Mammary epithelial cell (primary cell): ENCODE measurements at regions of chr20 and their contacts with region 1.

Region 1: GRCh38 chr20:1509237-1509636 is 18.0 kb upstream of the SIRPB2 start:
- DNase-seq: peak; percentile 54
- H3K4me3 ChIP-seq: no peak overlapping the region
- H3K27ac ChIP-seq: no peak overlapping the region
- H3K4me1 ChIP-seq: peaks cover 38% of the 10 kb centered on the region
- H3K27me3 ChIP-seq: no peaks in the 10 kb centered on the region
- CTCF ChIP-seq: peak; percentile 51 to 69

Region 2: GRCh38 chr20:1456300-1456699 is 52.9 kb before region 1 on chr20:
- CTCF ChIA-PET with region 1: no interaction called
- dilution Hi-C with region 1: no loop called
- in situ Hi-C with region 1: no loop called
- intact Hi-C with region 1: no loop called
- DNase-seq: no peak
- H3K4me3 ChIP-seq: no peak overlapping the region
- H3K27ac ChIP-seq: no peak overlapping the region
- H3K4me1 ChIP-seq: no peaks in the 10 kb centered on the region
- H3K27me3 ChIP-seq: no peaks in the 10 kb centered on the region
- CTCF ChIP-seq: no peak

Region 3: DNA sequence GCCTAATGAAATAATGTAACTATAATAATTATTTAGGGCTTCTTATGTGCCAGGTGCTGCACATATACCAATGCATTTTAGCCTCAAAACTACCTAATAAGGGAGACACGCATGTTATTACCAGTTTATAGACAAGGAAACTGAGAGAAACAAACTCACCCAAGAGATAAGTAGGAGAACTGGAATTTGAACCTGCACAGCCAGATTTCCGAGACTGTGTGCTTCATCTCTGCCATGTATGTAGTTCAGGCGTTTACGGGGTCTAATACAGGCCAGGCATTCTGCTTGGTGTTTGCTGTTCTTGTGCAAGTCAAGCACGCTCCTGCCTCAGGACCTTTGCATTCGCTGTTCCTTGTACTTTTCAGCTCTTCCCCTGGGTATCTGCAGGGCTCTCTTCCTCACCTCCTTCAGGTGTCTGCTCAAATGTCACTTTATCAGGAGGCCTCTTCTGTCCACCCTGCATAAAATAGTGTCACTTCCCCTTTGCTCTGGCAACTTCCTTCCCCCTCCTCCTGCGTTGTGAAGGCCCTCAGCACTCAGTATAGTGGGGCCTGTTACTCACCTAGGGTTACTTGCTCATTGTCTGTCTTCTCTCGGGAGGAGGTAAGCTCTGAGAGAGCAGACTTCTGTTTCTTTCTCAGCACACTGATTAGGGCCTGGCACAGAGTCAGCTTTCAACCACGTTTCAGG is 36.5 kb before region 1 on chr20:
- CTCF ChIA-PET with region 1: no interaction called
- dilution Hi-C with region 1: no loop called
- in situ Hi-C with region 1: no loop called
- intact Hi-C with region 1: no loop called
- DNase-seq: no peak
- H3K4me3 ChIP-seq: no peak overlapping the region
- H3K27ac ChIP-seq: no peak overlapping the region
- H3K4me1 ChIP-seq: peaks cover 47% of the 10 kb centered on the region
- H3K27me3 ChIP-seq: no peaks in the 10 kb centered on the region
- CTCF ChIP-seq: no peak

Region 4: DNA sequence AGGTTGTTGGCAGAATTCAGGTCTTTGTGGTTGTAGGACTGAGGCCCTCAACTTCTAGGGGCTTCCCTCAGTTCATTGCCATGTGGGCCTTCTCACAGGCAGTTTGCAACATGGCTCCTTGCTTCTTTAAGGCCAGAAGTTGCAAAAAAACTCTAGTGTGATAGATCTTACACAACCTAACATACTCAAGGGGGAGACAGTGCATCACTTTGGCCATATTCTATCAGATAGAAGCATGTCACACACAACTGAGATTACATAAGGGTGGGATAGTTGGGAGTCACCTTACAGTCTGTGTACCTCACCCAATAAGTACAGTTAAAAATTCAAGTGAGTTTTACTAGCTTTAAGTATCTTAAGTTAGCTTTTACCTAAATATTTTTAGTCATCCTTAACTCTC is 46.7 kb after region 1 on chr20:
- CTCF ChIA-PET with region 1: no interaction called
- dilution Hi-C with region 1: no loop called
- in situ Hi-C with region 1: no loop called
- intact Hi-C with region 1: loop called (anchors 5 kb)
- DNase-seq: no peak
- H3K4me3 ChIP-seq: no peak overlapping the region
- H3K27ac ChIP-seq: no peak overlapping the region
- H3K4me1 ChIP-seq: no peaks in the 10 kb centered on the region
- H3K27me3 ChIP-seq: no peaks in the 10 kb centered on the region
- CTCF ChIP-seq: no peak

Region 5: DNA sequence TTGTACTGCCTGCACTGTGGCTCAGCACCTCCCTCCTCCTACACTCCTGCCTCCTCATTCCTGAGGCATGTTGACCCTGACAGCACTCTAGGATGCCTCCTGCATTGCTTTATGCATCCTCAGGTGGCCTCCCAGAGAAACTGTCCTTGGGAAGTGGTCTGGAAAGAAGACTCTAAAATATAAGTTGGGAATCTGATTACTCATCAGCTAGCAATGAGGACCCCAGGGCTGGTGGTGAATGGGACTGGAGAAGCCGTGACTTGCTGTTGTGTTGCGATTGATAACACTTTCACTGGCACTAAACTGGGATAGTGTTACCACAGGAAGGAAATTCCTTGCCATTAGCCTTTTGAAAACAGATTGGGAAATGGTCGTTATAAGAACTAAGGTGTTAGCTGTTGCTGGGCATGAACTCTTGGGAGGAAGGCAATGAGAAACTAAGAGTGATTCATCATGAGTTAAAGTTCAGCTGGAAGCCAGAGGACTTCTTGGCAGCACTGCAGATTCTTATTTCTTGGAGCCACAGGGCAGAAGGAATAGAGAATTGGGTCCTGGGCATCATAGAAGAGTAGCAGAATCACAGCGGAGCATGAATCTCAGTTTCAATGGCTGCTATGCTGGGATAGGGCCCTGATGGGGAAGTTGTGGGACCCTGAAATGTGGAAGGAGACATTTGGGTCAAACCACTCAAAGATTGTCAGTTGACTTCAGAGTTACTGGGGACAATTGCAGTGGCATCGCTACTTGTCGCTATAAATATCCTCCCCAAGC is 58.3 kb after region 1 on chr20:
- CTCF ChIA-PET with region 1: no interaction called
- dilution Hi-C with region 1: no loop called
- in situ Hi-C with region 1: no loop called
- intact Hi-C with region 1: loop called (anchors 2 kb)
- DNase-seq: peak; percentile 89
- H3K4me3 ChIP-seq: no peak overlapping the region
- H3K27ac ChIP-seq: peak overlapping the region; percentile 80
- H3K4me1 ChIP-seq: peaks cover 39% of the 10 kb centered on the region
- H3K27me3 ChIP-seq: no peaks in the 10 kb centered on the region
- CTCF ChIP-seq: no peak

Region 6: DNA sequence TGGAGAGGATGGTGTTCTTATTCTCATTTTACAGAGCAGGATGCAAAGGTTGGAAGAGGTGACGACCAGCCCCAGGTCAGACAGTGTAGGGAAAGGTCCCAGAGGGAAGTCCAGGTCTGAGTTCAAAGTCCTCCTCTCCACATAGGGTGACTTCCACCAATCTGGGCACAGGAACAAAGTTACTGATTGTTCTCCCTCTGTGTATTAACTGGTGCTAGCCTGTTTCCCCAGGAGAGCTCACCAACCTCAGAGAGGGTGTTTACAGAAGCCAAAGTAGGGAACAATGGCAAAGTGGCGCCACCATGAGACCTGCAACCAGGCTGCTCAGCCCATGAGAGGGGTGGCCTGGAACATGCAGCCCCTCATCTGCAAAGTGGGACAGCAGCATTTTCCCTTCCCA is 127.4 kb after region 1 on chr20:
- CTCF ChIA-PET with region 1: no interaction called
- dilution Hi-C with region 1: no loop called
- in situ Hi-C with region 1: no loop called
- intact Hi-C with region 1: loop called (anchors 2 kb)
- DNase-seq: no peak
- H3K4me3 ChIP-seq: no peak overlapping the region
- H3K27ac ChIP-seq: no peak overlapping the region
- H3K4me1 ChIP-seq: peaks cover 17% of the 10 kb centered on the region
- H3K27me3 ChIP-seq: no peaks in the 10 kb centered on the region
- CTCF ChIP-seq: peak in 1 of 2 donors; percentile 7

Region 7: GRCh38 chr20:1718604-1719384 is 209.6 kb after region 1 on chr20:
- CTCF ChIA-PET with region 1: no interaction called
- dilution Hi-C with region 1: no loop called
- in situ Hi-C with region 1: no loop called
- intact Hi-C with region 1: loop called (anchors 1 kb)
- DNase-seq: peak; percentile 99
- H3K4me3 ChIP-seq: no peak overlapping the region
- H3K27ac ChIP-seq: peak overlapping the region; percentile 85
- H3K4me1 ChIP-seq: peaks cover 43% of the 10 kb centered on the region
- H3K27me3 ChIP-seq: no peaks in the 10 kb centered on the region
- CTCF ChIP-seq: no peak

Region 8: DNA sequence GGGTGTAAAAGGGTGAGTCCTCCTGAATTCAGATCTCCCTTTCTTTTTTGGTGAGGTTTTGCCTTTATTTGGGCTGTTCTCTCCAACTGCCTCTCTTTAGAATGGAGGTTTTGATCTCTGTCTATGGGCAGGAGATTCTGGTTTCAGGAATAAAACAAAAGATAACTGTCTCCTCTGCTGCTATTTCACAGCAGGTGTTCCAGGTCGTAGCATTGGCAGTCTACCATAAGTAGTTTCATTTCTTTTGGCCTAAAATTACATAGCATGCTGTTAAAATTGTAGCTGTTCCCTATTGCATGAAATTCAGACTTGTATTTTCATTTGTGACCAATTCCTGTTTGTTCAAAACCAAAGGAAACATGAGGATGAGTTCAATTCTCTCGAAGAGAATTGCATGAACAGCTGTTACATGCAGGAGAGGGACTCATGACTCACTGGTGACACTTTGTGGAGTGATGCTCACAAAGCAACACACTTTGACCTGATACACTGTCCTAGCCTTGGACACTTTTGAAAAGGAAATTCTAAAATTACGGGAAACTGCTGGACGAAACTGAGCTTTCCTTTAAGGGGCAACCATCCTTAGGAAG is 225.1 kb after region 1 on chr20:
- CTCF ChIA-PET with region 1: interaction called, 4 read pairs
- dilution Hi-C with region 1: no loop called
- in situ Hi-C with region 1: no loop called
- intact Hi-C with region 1: loop called (anchors 1 kb)
- DNase-seq: peak; percentile 36
- H3K4me3 ChIP-seq: no peak overlapping the region
- H3K27ac ChIP-seq: no peak overlapping the region
- H3K4me1 ChIP-seq: no peaks in the 10 kb centered on the region
- H3K27me3 ChIP-seq: no peaks in the 10 kb centered on the region
- CTCF ChIP-seq: peak; percentile 8 to 54

Region 9: DNA sequence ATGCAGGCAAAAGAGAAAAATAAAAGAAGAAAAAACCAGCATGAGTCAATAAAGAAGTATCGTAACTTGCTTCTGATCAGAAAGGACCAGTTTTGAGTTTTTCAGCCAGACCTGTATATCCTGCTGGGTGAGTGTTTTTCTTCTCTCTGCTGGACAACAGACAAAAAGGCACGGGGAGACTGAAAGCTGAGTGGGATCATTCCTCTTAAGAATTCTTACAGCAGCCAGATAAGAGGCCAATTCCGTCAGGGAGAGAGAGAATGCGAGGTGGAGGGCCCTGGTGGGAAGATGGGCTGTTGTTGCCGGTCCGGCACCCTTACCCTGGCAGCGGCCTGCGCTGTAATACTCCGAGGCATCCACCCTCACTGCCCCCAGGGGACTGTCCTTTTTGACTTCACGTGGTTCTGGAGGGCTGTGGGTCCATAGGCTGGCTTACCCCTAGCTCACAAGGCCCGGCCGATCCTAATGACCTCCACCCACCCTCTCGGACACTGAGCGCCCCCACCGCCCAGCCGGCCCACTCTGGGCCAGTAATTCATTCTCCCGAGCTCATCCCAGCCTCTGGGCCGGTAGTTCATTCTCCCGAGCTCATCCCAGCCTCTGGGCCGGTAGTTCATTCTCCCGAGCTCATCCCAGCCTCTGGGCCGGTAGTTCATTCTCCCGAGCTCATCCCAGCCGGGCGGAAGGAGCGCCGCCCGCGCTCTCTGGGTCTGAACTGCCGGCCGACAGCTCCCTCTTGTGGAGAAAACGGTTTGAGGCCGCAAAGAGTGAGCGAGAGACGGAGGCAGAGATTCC is 267.6 kb after region 1 on chr20:
- CTCF ChIA-PET with region 1: interaction called, 14 read pairs
- dilution Hi-C with region 1: no loop called
- in situ Hi-C with region 1: loop called (anchors 10 to 25 kb)
- intact Hi-C with region 1: loop called (anchors 1 kb)
- DNase-seq: peak; percentile 80
- H3K4me3 ChIP-seq: peak overlapping the region; percentile 48 to 63 (median 57)
- H3K27ac ChIP-seq: peak overlapping the region; percentile 37
- H3K4me1 ChIP-seq: peaks cover 14% of the 10 kb centered on the region
- H3K27me3 ChIP-seq: no peaks in the 10 kb centered on the region
- CTCF ChIP-seq: peak; percentile 62 to 87